Calu3 (cell line): ENCODE measurements at regions of chr19 and their contacts with region 1.

Region 1: DNA sequence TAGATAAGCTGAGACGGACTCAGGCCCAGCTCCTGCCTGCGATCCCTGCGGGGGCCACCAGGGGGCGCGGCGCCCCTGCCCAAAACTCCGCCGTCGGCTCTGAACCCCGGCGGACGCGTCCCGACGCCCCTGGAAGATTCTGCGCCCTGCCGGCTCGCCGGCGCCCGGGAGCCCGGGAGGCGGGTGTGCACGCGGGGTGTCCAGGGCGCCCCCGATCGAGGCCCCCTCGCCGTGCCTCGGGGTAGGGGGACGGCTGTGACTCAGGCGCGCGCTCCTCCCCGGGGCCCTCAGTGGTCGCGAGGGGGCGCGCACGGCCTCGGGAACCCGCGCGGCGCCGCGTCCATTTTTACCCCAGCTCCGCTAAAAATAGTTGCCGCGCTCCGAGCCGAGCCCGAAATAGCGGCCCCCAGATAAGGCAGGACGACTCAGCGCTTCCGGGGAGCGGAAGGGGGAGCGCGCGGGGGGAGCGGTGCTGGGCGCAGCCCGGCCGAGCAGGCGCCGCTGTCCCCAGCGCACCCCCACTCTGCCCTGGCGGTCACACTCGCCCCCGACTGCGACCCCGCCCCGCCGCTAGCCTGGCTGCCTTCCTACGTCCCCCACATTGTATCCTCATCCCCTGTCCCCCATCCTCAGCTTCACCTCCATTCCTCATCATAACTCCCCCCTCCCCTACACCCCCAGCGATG is 16.0 kb upstream of the ERCC1 start:
- DNase-seq: peak; percentile 92
- H3K4me3 Mint-ChIP-seq: peak overlapping the region; percentile 65
- H3K27ac Mint-ChIP-seq: peak overlapping the region; percentile 11
- H3K4me1 Mint-ChIP-seq: peaks cover 40% of the 10 kb centered on the region
- H3K27me3 Mint-ChIP-seq: no peaks in the 10 kb centered on the region
- CTCF ChIP-seq: peak; percentile 100

Region 2: GRCh38 chr19:45376045-45376724 is 63.5 kb before region 1 on chr19:
- CTCF ChIA-PET with region 1: no interaction called
- intact Hi-C with region 1: no loop called
- DNase-seq: peak; percentile 69
- H3K4me3 Mint-ChIP-seq: no peak overlapping the region
- H3K27ac Mint-ChIP-seq: peak overlapping the region; percentile 78
- H3K4me1 Mint-ChIP-seq: peaks cover 12% of the 10 kb centered on the region
- H3K27me3 Mint-ChIP-seq: no peaks in the 10 kb centered on the region
- CTCF ChIP-seq: no peak

Region 3: DNA sequence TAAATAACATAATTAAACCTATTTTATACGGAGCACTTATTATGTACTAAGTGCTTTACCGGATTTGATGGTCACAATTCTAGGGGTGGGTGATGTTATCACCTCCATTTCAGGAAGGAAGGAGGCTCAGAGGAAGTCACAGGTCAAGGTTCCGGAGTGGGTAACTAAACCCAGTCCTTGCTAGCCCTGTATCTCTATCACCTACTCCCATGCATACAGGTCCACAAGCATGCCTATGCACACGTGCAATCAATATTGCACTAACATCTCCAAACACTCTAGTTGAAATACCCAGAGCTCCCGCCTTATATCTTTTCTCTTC is 10.3 kb after region 1 on chr19:
- CTCF ChIA-PET with region 1: interaction called, 10 read pairs
- intact Hi-C with region 1: no loop called
- DNase-seq: no peak
- H3K4me3 Mint-ChIP-seq: peak overlapping the region; percentile 77
- H3K27ac Mint-ChIP-seq: peak overlapping the region; percentile 96
- H3K4me1 Mint-ChIP-seq: peaks cover 59% of the 10 kb centered on the region
- H3K27me3 Mint-ChIP-seq: no peaks in the 10 kb centered on the region
- CTCF ChIP-seq: no peak

Region 4: DNA sequence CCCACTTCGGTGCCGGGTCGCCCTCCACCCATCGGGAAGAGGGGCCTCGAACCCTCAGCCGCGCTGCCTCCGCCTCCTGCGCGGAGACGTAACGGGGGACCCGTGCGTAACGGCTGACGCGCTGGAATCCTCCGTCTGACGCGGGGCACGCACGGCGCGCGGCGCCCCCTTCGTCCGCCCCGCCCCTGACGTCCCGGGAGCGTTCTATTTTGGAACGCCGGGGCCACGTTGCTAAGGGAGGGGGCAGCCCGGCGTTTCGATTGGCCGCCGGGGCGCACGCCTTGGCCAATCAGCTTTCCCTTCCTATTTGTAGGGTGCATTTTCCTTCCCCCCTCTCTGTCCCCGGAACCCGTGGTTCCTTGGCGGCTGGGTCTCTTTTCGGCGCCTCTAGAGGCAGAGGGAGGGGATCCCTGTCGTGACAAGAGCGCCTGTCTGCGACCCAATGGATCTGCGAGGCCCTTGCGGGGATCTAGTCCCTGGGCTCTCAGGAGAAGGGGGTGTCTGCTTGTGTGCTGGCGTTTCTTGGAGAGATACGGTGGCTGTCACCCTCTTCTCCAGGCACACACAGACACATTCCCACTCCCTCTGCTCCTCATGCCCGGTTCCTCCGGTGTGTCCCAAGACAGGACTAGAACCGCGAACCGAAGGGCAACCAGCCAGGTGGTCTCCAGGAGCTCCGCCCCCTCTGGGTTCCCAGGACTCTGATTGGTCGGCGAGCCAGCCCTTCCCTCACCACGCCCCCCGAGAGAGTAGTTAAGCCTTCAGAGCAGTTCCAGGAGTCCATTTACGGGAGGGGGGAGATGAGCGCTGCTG is 29.6 kb after region 1 on chr19:
- CTCF ChIA-PET with region 1: interaction called, 47 read pairs
- intact Hi-C with region 1: no loop called
- DNase-seq: peak; percentile 98
- H3K4me3 Mint-ChIP-seq: peak overlapping the region; percentile 86
- H3K27ac Mint-ChIP-seq: peak overlapping the region; percentile 99
- H3K4me1 Mint-ChIP-seq: peaks cover 35% of the 10 kb centered on the region
- H3K27me3 Mint-ChIP-seq: peaks cover 23% of the 10 kb centered on the region
- CTCF ChIP-seq: no peak

Region 5: DNA sequence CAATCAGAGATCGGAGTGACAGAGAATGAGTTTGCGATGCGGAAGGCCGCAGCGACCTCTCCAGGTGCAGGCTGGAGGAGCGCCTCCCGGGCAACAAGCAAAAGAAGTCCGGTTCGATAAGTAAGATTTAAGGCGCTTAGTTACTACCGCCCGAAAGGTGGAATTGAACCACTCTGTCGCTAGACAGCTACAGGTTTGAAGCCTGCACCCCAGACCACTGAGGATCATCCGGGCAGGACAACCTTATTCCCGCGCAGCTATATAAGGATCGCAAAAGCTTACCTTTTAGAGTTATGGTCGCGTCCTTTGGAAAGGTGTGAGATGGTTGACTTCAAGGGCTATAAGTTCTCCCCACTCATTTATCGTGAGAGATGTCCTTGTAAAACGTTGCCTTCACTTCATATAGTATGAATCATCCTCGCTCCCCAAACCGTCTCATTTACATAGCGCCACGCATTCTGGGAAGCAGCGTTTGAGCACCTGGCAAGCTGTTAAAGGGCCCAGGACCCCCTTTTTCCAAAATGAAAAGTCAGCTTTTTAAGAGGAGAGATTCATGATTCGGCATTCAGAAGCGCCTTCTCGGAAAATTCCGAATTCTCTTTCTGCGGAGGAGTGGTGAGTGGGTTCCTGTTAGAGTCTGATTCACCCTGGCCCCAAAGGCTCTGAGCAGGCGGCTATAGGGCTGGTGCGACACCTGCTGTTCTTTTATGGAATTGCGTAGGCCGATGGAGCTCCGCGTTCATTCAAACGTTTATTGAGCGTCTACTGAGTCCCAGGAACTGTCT is 38.9 kb after region 1 on chr19:
- CTCF ChIA-PET with region 1: interaction called, 181 read pairs
- intact Hi-C with region 1: loop called (anchors 1 kb)
- DNase-seq: peak; percentile 92
- H3K4me3 Mint-ChIP-seq: peak overlapping the region; percentile 52
- H3K27ac Mint-ChIP-seq: peak overlapping the region; percentile 98
- H3K4me1 Mint-ChIP-seq: peaks cover 31% of the 10 kb centered on the region
- H3K27me3 Mint-ChIP-seq: no peaks in the 10 kb centered on the region
- CTCF ChIP-seq: peak; percentile 99

Region 6: GRCh38 chr19:45485305-45486077 is 45.8 kb after region 1 on chr19:
- CTCF ChIA-PET with region 1: interaction called, 181 read pairs
- intact Hi-C with region 1: no loop called
- DNase-seq: peak; percentile 99
- H3K4me3 Mint-ChIP-seq: peak overlapping the region; percentile 79
- H3K27ac Mint-ChIP-seq: peak overlapping the region; percentile 59
- H3K4me1 Mint-ChIP-seq: peaks cover 10% of the 10 kb centered on the region
- H3K27me3 Mint-ChIP-seq: no peaks in the 10 kb centered on the region
- CTCF ChIP-seq: peak; percentile 82